H1 (cell line): ENCODE measurements at regions of chr5 and their contacts with region 1.

Region 1: GRCh38 chr5:932628-933250 is 40.1 kb downstream of the TRIP13 start:
- DNase-seq: no peak
- H3K4me3 ChIP-seq: no peak overlapping the region
- H3K27ac ChIP-seq: no peak overlapping the region
- H3K4me1 ChIP-seq: no peaks in the 10 kb centered on the region
- H3K27me3 ChIP-seq: no peaks in the 10 kb centered on the region
- CTCF ChIP-seq: no peak
- EP300 ChIP-seq: no peak
- POLR2A ChIP-seq: no peak
- RAD21 ChIP-seq: no peak

Region 2: DNA sequence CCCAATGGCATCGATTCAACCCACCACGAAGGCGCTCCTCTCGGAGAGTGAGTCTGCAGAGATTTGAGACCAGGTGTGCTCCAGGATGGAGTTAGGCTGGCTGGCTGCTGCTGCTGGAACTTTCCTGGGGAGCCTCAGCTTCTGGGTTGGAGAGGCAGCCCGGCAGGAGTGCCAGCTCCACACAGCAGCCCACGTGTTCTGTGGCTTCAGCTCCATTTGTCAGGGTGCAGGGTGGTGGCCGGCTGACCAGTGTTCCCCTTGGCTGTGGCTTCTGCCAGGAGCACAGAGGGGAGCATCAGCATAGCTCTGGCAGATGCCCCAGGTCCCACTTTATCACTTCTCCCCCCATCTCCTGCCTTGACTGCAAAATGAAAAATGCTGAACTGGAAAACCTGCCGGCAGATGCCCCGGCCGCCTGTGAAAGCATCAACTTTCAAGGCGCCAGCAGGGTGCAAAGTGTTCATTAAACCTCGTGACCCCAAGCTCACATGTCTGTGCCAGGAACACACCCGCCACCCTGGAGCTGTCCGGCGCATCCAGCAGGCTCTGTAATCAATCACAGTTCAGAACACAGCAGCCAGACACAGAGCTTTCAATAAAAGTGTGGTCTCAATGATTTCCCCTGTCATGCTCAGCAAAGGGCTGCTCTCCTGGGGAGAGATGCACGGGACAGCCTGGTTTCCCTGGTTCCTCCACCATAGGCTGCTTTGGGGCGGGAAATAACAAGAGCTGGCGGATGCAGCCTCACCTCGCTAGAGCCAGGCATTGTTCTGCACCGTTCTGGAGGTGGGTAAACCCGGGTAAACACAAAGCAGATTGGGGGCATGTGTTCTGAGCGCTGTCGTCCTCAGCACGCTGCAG is 13.2 kb after region 1 on chr5:
- CTCF ChIA-PET with region 1: interaction called, 13 read pairs
- POLR2A ChIA-PET with region 1: interaction called, 8 read pairs
- DNase-seq: peak in 1 of 2 experiments; percentile 42
- H3K4me3 ChIP-seq: no peak overlapping the region
- H3K27ac ChIP-seq: no peak overlapping the region
- H3K4me1 ChIP-seq: peaks cover 0 to 4% (median 0%) of the 10 kb centered on the region in 4 experiments; a peak in 2 of 7 replicates
- H3K27me3 ChIP-seq: peaks cover 0 to 6% (median 4%) of the 10 kb centered on the region in 4 experiments; a peak in 4 of 7 replicates
- CTCF ChIP-seq: no peak
- EP300 ChIP-seq: no peak
- POLR2A ChIP-seq: no peak
- RAD21 ChIP-seq: no peak

Region 3: GRCh38 chr5:1011226-1011631 is 78.5 kb after region 1 on chr5:
- CTCF ChIA-PET with region 1: interaction called, 12 read pairs
- POLR2A ChIA-PET with region 1: interaction called, 3 read pairs
- DNase-seq: peak in 1 of 2 experiments; percentile 90
- H3K4me3 ChIP-seq: no peak overlapping the region
- H3K27ac ChIP-seq: no peak overlapping the region
- H3K4me1 ChIP-seq: peaks cover 3 to 15% (median 6%) of the 10 kb centered on the region in 4 experiments; a peak in 6 of 7 replicates
- H3K27me3 ChIP-seq: peaks cover 14 to 34% (median 30%) of the 10 kb centered on the region in 4 experiments
- CTCF ChIP-seq: peak in 2 of 3 experiments; percentile 81 to 96; a peak in 3 of 4 replicates
- EP300 ChIP-seq: no peak
- POLR2A ChIP-seq: no peak
- RAD21 ChIP-seq: peak; percentile 57 to 58

Region 4: GRCh38 chr5:1037123-1037670 is 104.5 kb after region 1 on chr5:
- CTCF ChIA-PET with region 1: no interaction called
- POLR2A ChIA-PET with region 1: no interaction called
- DNase-seq: no peak
- H3K4me3 ChIP-seq: no peak overlapping the region
- H3K27ac ChIP-seq: no peak overlapping the region
- H3K4me1 ChIP-seq: no peaks in the 10 kb centered on the region; a peak in 1 of 7 replicates
- H3K27me3 ChIP-seq: no peaks in the 10 kb centered on the region
- CTCF ChIP-seq: no peak
- EP300 ChIP-seq: no peak
- POLR2A ChIP-seq: no peak
- RAD21 ChIP-seq: no peak